Left ventricle myocardium inferior (tissue), 1 donor: ENCODE measurements at regions of chr12 and their contacts with region 1.

Region 1: GRCh38 chr12:26853303-26854030 is 20.5 kb upstream of the ITPR2 start:
- DNase-seq: peak; percentile 61
- H3K4me3 ChIP-seq: no peak overlapping the region
- H3K27ac ChIP-seq: no peak overlapping the region
- H3K4me1 ChIP-seq: peaks cover 12% of the 10 kb centered on the region
- H3K27me3 ChIP-seq: no peaks in the 10 kb centered on the region
- CTCF ChIP-seq: peak; percentile 90

Region 2: GRCh38 chr12:26884765-26885576 is 31.5 kb after region 1 on chr12:
- intact Hi-C with region 1: loop called (anchors 2 kb)
- DNase-seq: peak; percentile 60
- H3K4me3 ChIP-seq: peak overlapping the region; percentile 15
- H3K27ac ChIP-seq: no peak overlapping the region
- H3K4me1 ChIP-seq: peaks cover 4% of the 10 kb centered on the region
- H3K27me3 ChIP-seq: no peaks in the 10 kb centered on the region
- CTCF ChIP-seq: peak; percentile 96